ENCODE measurements at regions of chr6 and their contacts with region 1.

Region 1: GRCh38 chr6:107957909-107958688 is at the start of gene SEC63:
- DNase-seq: peak; percentile 92 to 99 (median 97)
- H3K4me3 ChIP-seq: peak within 1 kb of the TSS; percentile 65 to 97 (median 88)
- H3K27ac ChIP-seq: peak within 1 kb of the TSS in 57 of 59 donors; percentile 32 to 93 (median 84)
- H3K27me3 ChIP-seq: no peaks in the 10 kb centered on the region
- CTCF ChIP-seq: peak in 23 of 56 donors; percentile 3 to 40 (median 19)
- total RNA-seq, gene SEC63: 54.8 to 112 (median 82.9) TPM

Region 2: GRCh38 chr6:107114213-107114905 is 843.7 kb before region 1 on chr6:
- intact Hi-C with region 1: loop called (anchors 5 to 10 kb)
- DNase-seq: peak; percentile 44 to 89 (median 74)
- H3K4me3 ChIP-seq: peak overlapping the region; percentile 39 to 87 (median 71)
- H3K27ac ChIP-seq: peak overlapping the region in 57 of 59 donors; percentile 28 to 91 (median 75)
- H3K27me3 ChIP-seq: no peaks in the 10 kb centered on the region
- CTCF ChIP-seq: peak; percentile 57 to 98 (median 86)

Region 3: DNA sequence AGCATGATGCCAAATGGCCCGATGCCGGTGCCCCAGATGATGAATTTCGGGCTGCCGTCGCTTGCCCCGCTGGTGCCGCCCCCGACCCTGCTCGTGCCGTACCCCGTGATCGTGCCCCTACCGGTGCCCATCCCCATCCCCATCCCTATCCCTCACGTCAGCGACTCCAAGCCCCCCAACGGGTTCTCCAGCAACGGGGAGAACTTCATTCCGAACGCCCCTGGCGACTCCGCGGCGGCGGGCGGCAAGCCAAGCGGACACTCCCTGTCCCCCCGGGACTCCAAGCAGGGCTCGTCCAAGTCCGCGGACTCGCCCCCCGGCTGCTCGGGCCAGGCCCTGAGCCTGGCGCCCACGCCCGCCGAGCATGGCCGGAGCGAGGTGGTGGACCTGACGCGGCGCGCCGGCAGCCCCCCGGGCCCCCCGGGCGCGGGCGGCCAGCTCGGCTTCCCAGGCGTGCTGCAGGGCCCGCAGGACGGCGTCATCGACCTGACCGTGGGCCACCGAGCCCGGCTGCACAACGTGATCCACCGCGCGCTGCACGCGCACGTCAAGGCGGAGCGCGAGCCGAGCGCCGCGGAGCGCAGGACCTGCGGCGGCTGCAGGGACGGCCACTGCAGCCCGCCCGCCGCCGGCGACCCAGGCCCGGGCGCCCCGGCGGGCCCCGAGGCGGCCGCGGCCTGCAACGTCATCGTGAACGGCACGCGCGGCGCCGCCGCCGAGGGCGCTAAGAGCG is 323.6 kb before region 1 on chr6:
- intact Hi-C with region 1: no loop called
- DNase-seq: peak in 2 of 10 donors; percentile 20 to 28
- H3K4me3 ChIP-seq: peak overlapping the region in 49 of 59 donors; percentile 6 to 61 (median 44)
- H3K27ac ChIP-seq: peak overlapping the region in 37 of 59 donors; percentile 6 to 77 (median 62)
- H3K27me3 ChIP-seq: no peaks in the 10 kb centered on the region
- CTCF ChIP-seq: no peak

Region 4: DNA sequence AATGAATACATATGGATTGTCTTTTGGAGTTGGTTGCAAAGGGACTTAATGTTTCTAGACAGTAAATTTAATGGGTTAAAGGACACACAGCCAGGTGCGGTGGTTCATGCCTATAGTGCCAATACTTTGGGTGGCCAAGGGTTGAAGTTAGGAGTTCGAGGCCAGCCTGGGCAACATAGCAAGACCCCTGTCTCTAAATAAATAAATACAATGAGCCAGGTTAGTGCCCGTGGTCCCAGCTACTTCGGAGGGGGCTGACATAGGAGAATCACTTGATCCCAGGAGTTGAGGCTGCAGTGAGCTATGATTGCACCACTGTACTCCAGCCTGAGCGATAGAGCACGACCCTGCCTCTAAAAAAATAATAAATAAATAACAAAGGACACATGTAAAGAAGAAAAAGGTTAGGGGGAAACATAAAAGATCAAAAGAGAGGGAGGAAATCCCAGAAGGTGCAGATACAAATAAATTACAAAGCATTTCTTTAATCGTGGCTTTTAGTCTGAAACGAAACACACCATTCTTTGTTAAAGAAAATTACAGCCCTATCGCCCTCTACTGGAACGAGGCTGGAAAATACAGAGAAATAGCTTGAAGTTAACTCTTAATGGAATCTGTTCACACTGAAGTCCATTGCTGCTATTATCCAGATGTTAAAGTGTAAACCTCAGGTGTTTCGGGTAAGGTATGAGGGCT is 91.3 kb before region 1 on chr6:
- intact Hi-C with region 1: loop called in 1 of 2 experiments (anchors 10 kb)
- DNase-seq: no peak
- H3K4me3 ChIP-seq: peak overlapping the region in 11 of 59 donors; percentile 5 to 47 (median 21)
- H3K27ac ChIP-seq: peak overlapping the region in 4 of 59 donors; percentile 36 to 59 (median 42)
- H3K27me3 ChIP-seq: no peaks in the 10 kb centered on the region
- CTCF ChIP-seq: peak in 55 of 56 donors; percentile 32 to 73 (median 57)

Measured in dorsolateral prefrontal cortex (tissue), 120 donors.